Ovary (tissue), 10 donors: ENCODE measurements at regions of chr15 and their contacts with region 1.

Region 1: DNA sequence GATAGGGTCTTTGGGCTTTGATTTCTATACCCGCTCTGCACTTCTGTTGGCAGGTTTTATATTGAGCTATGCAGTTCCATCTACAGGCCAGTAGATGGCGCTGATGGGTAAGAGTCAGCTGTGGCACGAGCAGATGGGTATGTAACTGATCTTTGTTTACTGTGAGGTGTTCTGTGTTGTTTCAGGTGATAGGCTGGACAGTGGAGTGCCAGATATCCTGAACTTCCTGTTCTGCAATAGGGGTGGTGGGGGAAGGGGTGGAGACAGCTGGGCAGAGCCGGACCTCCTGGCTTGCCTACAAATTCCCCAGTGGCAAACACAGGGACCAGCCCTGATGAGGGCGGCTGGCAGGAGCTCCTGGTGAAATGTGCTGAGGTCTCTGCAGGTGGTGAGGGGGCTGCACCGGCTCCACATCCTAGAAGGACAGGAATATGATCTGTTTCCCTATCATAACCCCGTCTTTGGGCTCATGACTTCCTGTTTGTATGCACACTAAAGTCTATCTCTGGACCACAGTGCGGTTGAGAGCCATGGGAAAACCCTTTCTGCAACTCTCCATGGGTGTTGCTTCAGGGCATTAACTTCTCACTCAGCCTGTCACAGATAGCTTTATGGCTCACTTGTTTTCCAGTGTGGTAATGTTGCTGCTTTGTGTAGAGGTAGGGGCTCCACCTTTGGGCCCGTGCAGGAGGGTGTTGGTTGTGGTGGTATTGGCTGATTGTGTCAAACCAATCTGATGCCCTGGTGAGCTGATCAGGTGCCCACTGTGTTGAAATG is 13.4 kb upstream of the FAM98B start:
- DNase-seq: peak in 2 of 5 donors; percentile 24 to 34
- H3K4me3 ChIP-seq: no peak overlapping the region
- H3K27ac ChIP-seq: no peak overlapping the region
- H3K4me1 ChIP-seq: no peaks in the 10 kb centered on the region
- H3K27me3 ChIP-seq: no peaks in the 10 kb centered on the region
- CTCF ChIP-seq: peak; percentile 50 to 74 (median 61)
- EP300 ChIP-seq: no peak
- POLR2A ChIP-seq: no peak

Region 2: DNA sequence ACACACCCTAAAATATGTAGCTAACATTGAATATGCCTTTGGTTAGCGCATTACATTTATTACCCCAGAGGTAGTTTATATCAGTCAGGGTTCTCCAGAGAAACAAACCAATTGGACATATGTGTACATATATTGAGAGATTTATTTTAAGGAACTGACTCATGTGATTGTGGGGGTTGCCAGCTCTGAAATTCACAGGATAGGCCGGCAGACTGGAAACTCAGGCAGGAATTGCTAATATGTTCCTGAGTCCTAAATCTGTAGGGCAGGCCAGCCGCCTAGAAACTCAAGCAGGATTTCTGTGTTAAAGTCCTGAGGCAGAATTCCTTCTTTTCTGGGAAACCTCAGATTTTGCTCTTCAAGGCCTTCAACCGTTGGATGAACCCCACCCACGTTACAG is 1671.4 kb before region 1 on chr15:
- intact Hi-C with region 1: no loop called
- DNase-seq: no peak
- H3K4me3 ChIP-seq: no peak overlapping the region
- H3K27ac ChIP-seq: no peak overlapping the region
- H3K4me1 ChIP-seq: no peaks in the 10 kb centered on the region
- H3K27me3 ChIP-seq: no peaks in the 10 kb centered on the region
- CTCF ChIP-seq: no peak
- EP300 ChIP-seq: no peak
- POLR2A ChIP-seq: no peak

Region 3: GRCh38 chr15:38671675-38672254 is 231.2 kb after region 1 on chr15:
- intact Hi-C with region 1: loop called in 1 of 4 experiments (anchors 10 kb)
- DNase-seq: no peak
- H3K4me3 ChIP-seq: no peak overlapping the region
- H3K27ac ChIP-seq: no peak overlapping the region
- H3K4me1 ChIP-seq: no peaks in the 10 kb centered on the region
- H3K27me3 ChIP-seq: no peaks in the 10 kb centered on the region
- CTCF ChIP-seq: no peak
- EP300 ChIP-seq: no peak
- POLR2A ChIP-seq: no peak

Region 4: GRCh38 chr15:38683382-38684242 is 243.1 kb after region 1 on chr15:
- intact Hi-C with region 1: loop called in 3 of 4 experiments (anchors 10 kb)
- DNase-seq: peak in 2 of 5 donors; percentile 22 to 36
- H3K4me3 ChIP-seq: no peak overlapping the region
- H3K27ac ChIP-seq: no peak overlapping the region
- H3K4me1 ChIP-seq: no peaks in the 10 kb centered on the region
- H3K27me3 ChIP-seq: no peaks in the 10 kb centered on the region
- CTCF ChIP-seq: no peak
- EP300 ChIP-seq: no peak
- POLR2A ChIP-seq: no peak

Region 5: GRCh38 chr15:38930851-38931537 is 490.5 kb after region 1 on chr15:
- intact Hi-C with region 1: no loop called
- DNase-seq: no peak
- H3K4me3 ChIP-seq: no peak overlapping the region
- H3K27ac ChIP-seq: no peak overlapping the region
- H3K4me1 ChIP-seq: no peaks in the 10 kb centered on the region
- H3K27me3 ChIP-seq: no peaks in the 10 kb centered on the region
- CTCF ChIP-seq: no peak
- EP300 ChIP-seq: no peak
- POLR2A ChIP-seq: no peak